ENCODE measurements at regions of chr6 and their contacts with region 1.

Region 1: GRCh38 chr6:157756708-157757429 is 66.2 kb upstream of the SNX9 start:
- DNase-seq: peak; percentile 92
- ATAC-seq: peak; percentile 20
- H3K4me3 Mint-ChIP-seq: peak overlapping the region; percentile 11
- H3K27ac Mint-ChIP-seq: peak overlapping the region; percentile 89
- H3K4me1 Mint-ChIP-seq: peaks cover 89% of the 10 kb centered on the region
- H3K27me3 Mint-ChIP-seq: no peaks in the 10 kb centered on the region
- CTCF ChIP-seq: peak; percentile 83

Region 2: DNA sequence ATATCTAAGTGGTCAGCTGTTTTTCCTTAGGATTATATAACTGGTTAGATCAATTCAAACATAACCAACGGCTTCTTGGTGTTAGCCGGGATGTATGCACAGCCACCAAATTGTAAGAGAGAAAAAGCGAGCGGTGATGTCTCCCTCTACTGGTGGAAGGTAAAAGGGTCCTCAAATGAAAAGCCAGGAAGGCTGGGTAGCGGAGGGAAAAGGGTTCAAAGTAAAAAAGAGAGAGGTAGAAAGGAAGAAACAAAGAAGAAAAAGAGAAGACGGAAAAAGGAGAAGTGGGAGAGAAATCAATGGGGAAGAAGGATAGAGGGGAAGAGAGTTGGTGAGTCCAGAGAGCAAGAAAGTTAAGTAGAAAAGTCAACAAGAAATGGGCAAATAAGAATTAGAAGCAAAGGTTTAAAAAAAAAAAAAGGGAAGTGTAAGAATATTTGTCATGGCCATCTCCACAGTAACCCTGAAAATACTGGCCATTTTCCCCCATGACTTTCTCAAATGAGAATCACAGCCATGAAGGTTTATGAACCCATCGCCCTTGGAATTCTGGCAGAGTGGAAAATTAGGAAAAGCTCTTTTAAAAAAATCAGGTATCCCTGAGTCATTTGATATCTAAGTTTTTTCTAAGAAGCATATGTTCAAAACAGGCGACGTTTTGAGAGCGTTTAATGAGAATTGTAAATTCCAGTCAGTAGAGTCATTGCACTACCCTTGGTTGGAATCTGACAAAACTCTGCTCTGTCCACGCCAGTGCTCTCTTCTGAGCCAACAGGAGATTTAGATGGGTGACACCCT is 89.5 kb before region 1 on chr6:
- CTCF ChIA-PET with region 1: interaction called, 21 read pairs
- POLR2A ChIA-PET with region 1: interaction called, 3 read pairs
- intact Hi-C with region 1: no loop called
- DNase-seq: peak; percentile 71
- ATAC-seq: peak; percentile 65
- H3K4me3 Mint-ChIP-seq: no peak overlapping the region
- H3K27ac Mint-ChIP-seq: no peak overlapping the region
- H3K4me1 Mint-ChIP-seq: peaks cover 23% of the 10 kb centered on the region
- H3K27me3 Mint-ChIP-seq: peaks cover 3% of the 10 kb centered on the region
- CTCF ChIP-seq: peak; percentile 99

Region 3: GRCh38 chr6:157830354-157831017 is 73.6 kb after region 1 on chr6:
- CTCF ChIA-PET with region 1: interaction called, 22 read pairs
- POLR2A ChIA-PET with region 1: interaction called, 102 read pairs
- intact Hi-C with region 1: no loop called
- DNase-seq: no peak
- ATAC-seq: peak; percentile 47
- H3K4me3 Mint-ChIP-seq: peak overlapping the region; percentile 49
- H3K27ac Mint-ChIP-seq: peak overlapping the region; percentile 89
- H3K4me1 Mint-ChIP-seq: peaks cover 73% of the 10 kb centered on the region
- H3K27me3 Mint-ChIP-seq: no peaks in the 10 kb centered on the region
- CTCF ChIP-seq: no peak

Region 4: GRCh38 chr6:157879873-157880254 is 123.0 kb after region 1 on chr6:
- CTCF ChIA-PET with region 1: interaction called, 66 read pairs
- POLR2A ChIA-PET with region 1: interaction called, 4 read pairs
- intact Hi-C with region 1: loop called (anchors 5 kb)
- DNase-seq: no peak
- ATAC-seq: no peak
- H3K4me3 Mint-ChIP-seq: no peak overlapping the region
- H3K27ac Mint-ChIP-seq: peak overlapping the region; percentile 35
- H3K4me1 Mint-ChIP-seq: peaks cover 75% of the 10 kb centered on the region
- H3K27me3 Mint-ChIP-seq: no peaks in the 10 kb centered on the region
- CTCF ChIP-seq: no peak

Region 5: DNA sequence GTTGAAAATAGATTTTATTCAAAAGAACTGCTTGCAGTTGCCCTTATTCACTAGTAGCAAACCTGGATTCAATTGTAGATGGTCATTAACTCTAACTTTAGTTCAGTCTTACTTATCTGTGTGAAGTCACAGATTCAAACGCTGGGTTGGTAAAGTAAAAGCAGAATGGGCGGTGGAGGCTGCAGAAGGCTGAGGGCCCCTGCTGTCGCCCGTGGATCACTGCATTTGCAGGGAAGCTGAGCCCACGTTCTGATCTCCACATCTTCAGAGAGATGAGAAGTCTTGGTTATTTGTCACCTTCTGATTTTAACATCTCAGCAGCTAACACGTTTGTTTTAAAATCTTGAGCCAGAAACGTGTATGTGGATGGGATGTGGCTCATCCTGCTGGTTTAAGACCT is 141.3 kb after region 1 on chr6:
- CTCF ChIA-PET with region 1: interaction called, 16 read pairs
- POLR2A ChIA-PET with region 1: no interaction called
- intact Hi-C with region 1: no loop called
- DNase-seq: peak; percentile 47
- ATAC-seq: peak; percentile 54
- H3K4me3 Mint-ChIP-seq: no peak overlapping the region
- H3K27ac Mint-ChIP-seq: peak overlapping the region; percentile 25
- H3K4me1 Mint-ChIP-seq: peaks cover 19% of the 10 kb centered on the region
- H3K27me3 Mint-ChIP-seq: no peaks in the 10 kb centered on the region
- CTCF ChIP-seq: no peak

Measured in activated CD8-positive, alpha-beta T cell treated with anti-CD3 and anti-CD28 coated beads for 36 hours (primary cell).